Mammary epithelial cell (primary cell): ENCODE measurements at regions of chr1 and their contacts with region 1.

Region 1: GRCh38 chr1:18629659-18630510 is 761 bp upstream of the PAX7 start:
- DNase-seq: no peak
- H3K4me3 ChIP-seq: no peak overlapping the region
- H3K27ac ChIP-seq: no peak overlapping the region
- H3K4me1 ChIP-seq: no peaks in the 10 kb centered on the region
- H3K27me3 ChIP-seq: peaks cover 67% of the 10 kb centered on the region
- CTCF ChIP-seq: no peak

Region 2: DNA sequence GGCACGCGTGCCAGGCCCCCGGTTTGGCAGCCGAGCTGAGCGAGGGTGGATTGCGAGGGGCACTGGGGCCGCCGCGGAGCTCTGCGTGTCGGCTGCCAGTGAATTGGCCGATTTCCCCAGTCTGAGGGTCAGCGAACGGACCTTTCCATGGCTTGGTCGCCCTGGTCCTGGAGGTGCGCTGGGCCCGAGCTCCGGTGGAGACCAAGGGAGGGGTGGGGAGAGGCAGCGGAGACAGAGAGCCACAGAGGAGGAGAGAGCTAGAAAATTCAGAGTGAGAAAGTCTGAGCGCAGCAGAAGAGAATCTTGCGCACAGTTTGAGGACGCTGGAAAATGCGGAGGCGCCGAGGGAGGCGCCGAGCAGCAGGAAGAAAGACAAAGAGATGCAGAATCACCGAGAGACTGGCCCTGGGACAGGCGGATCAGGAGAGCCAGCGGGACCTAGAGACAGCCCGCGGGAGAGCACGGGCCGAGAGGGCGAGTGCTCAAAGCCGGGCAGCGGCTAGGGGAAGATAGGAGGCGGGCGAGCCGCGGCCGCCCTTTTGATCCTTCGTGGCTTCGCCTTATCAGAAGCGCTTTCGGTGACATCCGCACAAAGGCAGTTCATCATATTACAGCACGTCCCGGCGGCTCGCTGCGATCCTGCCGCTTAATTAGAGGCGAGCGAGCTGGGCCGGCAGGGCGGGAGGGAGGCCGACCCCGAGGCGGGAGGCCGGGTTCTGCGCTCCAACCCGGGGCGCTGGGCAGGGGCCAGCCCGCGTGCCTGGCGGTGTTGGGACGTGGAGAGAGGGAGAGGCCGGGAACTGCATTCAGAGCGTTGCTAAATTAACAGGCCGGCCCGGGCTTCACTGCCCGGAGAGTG is 13.5 kb after region 1 on chr1:
- CTCF ChIA-PET with region 1: no interaction called
- dilution Hi-C with region 1: no loop called
- in situ Hi-C with region 1: no loop called
- intact Hi-C with region 1: loop called (anchors 2 kb)
- DNase-seq: no peak
- H3K4me3 ChIP-seq: no peak overlapping the region
- H3K27ac ChIP-seq: no peak overlapping the region
- H3K4me1 ChIP-seq: peaks cover 13% of the 10 kb centered on the region
- H3K27me3 ChIP-seq: peaks cover 89% of the 10 kb centered on the region
- CTCF ChIP-seq: no peak

Region 3: GRCh38 chr1:18686540-18686939 is 56.7 kb after region 1 on chr1:
- CTCF ChIA-PET with region 1: no interaction called
- dilution Hi-C with region 1: loop called (anchors 5 kb)
- in situ Hi-C with region 1: no loop called
- intact Hi-C with region 1: no loop called
- DNase-seq: no peak
- H3K4me3 ChIP-seq: no peak overlapping the region
- H3K27ac ChIP-seq: no peak overlapping the region
- H3K4me1 ChIP-seq: no peaks in the 10 kb centered on the region
- H3K27me3 ChIP-seq: no peaks in the 10 kb centered on the region
- CTCF ChIP-seq: no peak

Region 4: GRCh38 chr1:18703041-18703641 is 73.3 kb after region 1 on chr1:
- CTCF ChIA-PET with region 1: no interaction called
- dilution Hi-C with region 1: no loop called
- in situ Hi-C with region 1: no loop called
- intact Hi-C with region 1: no loop called
- DNase-seq: peak; percentile 50
- H3K4me3 ChIP-seq: peak overlapping the region in 1 of 3 experiments; percentile 20
- H3K27ac ChIP-seq: no peak overlapping the region
- H3K4me1 ChIP-seq: no peaks in the 10 kb centered on the region
- H3K27me3 ChIP-seq: peaks cover 2% of the 10 kb centered on the region
- CTCF ChIP-seq: no peak